A549 (cell line): ENCODE measurements at regions of chrX and their contacts with region 1.

Region 1: GRCh38 chrX:65706041-65706828 is 38.8 kb downstream of the MSN start:
- DNase-seq: peak; percentile 30 to 61
- ATAC-seq: peak; percentile 74 to 82
- H3K4me3 ChIP-seq: no peak overlapping the region
- H3K27ac ChIP-seq: peak overlapping the region; percentile 50 to 73; a peak in 5 of 6 replicates
- H3K4me1 ChIP-seq: peaks cover 42% of the 10 kb centered on the region
- CTCF ChIP-seq: no peak
- EP300 ChIP-seq: no peak
- POLR2A ChIP-seq: no peak
- RAD21 ChIP-seq: no peak

Region 2: GRCh38 chrX:65595460-65595876 is 110.8 kb before region 1 on chrX:
- CTCF ChIA-PET with region 1: interaction called, 11 read pairs
- POLR2A ChIA-PET with region 1: no interaction called
- DNase-seq: peak; percentile 74 to 92
- ATAC-seq: peak; percentile 93 to 97
- H3K4me3 ChIP-seq: no peak overlapping the region
- H3K27ac ChIP-seq: peak overlapping the region; percentile 69 to 86
- H3K4me1 ChIP-seq: peaks cover 13% of the 10 kb centered on the region
- CTCF ChIP-seq: peak; percentile 94
- EP300 ChIP-seq: no peak
- POLR2A ChIP-seq: no peak
- RAD21 ChIP-seq: peak; percentile 89 to 93

Region 3: DNA sequence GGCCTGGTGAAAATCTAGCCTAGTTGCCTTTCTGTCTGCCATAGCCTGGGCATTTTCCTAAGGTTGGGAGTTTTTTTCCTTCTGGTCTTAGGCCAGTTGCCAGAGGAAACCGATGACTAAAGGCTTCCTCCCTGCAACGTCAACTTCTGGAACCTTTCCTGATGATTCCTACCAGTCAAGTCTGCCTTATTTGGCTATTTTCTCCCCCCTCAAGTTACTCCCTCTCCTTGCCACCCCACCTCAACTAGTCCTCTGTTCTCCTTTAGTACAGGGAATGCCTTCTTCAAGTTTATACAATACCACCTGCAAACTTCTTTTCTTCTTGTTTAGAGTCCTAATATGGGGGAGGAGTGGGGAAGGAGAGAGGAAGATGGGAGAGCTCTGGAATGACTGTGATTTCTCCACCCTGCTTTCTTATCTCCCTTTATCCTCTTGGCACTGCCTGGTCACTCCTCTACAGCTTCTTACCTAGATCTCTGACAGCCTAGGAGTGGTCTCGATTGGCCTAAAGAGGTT is 28.2 kb before region 1 on chrX:
- CTCF ChIA-PET with region 1: interaction called, 10 read pairs
- POLR2A ChIA-PET with region 1: no interaction called
- DNase-seq: peak; percentile 28 to 71
- ATAC-seq: peak; percentile 69 to 71
- H3K4me3 ChIP-seq: peak overlapping the region; percentile 27; the same call in 2 of the 3 replicates
- H3K27ac ChIP-seq: peak overlapping the region; percentile 86 to 87
- H3K4me1 ChIP-seq: peaks cover 90% of the 10 kb centered on the region
- CTCF ChIP-seq: no peak
- EP300 ChIP-seq: no peak
- POLR2A ChIP-seq: no peak
- RAD21 ChIP-seq: no peak